ENCODE measurements at regions of chr5 and their contacts with region 1.

Region 1: GRCh38 chr5:40688127-40688761 is 8.5 kb downstream of the PTGER4 start:
- DNase-seq: peak; percentile 66 to 94 (median 81)
- ATAC-seq: peak; percentile 90
- H3K4me3 ChIP-seq: no peak overlapping the region
- H3K4me1 ChIP-seq: peaks cover 26% of the 10 kb centered on the region
- CTCF ChIP-seq: peak; percentile 70

Region 2: DNA sequence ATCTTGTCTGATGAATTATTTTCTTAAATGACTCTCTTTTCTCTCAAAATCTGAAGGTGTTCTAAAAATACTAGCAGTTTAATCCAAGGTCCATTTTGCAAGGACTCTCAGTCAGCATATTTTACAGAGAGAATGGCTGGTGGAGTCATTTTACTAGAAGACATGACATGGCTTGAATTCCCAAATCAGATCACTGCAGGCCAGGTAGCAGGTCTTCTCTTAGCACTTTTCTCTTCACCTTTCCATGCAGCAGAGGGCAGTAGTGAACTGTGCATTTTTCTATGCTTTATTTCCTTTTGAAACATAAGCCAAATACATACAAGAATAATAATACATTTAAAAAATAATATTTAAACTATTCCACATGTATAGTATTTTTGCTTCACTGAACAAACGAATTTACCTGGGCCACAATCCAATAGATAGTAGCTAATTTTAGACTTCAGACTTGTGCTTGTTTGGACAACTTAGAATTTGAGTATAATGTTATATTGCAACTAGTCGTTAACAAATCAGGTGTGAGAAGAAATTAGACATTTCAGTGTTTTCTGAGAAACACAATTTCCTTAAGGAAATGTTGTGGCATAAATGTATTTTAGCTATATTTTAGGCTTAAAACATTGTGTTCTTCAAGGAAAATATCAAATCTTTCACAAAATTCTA is 974.1 kb before region 1 on chr5:
- intact Hi-C with region 1: loop called (anchors 10 kb)
- DNase-seq: peak in 1 of 3 donors; percentile 84
- ATAC-seq: peak; percentile 83
- H3K4me3 ChIP-seq: no peak overlapping the region
- H3K4me1 ChIP-seq: peaks cover 6% of the 10 kb centered on the region
- CTCF ChIP-seq: peak; percentile 41

Region 3: GRCh38 chr5:39948867-39949468 is 739.3 kb before region 1 on chr5:
- intact Hi-C with region 1: loop called (anchors 5 to 10 kb)
- DNase-seq: peak in 1 of 3 donors; percentile 90
- ATAC-seq: peak; percentile 84
- H3K4me3 ChIP-seq: no peak overlapping the region
- H3K4me1 ChIP-seq: no peaks in the 10 kb centered on the region
- CTCF ChIP-seq: no peak

Region 4: GRCh38 chr5:40442346-40442745 is 245.9 kb before region 1 on chr5:
- intact Hi-C with region 1: loop called in 1 of 2 experiments (anchors 5 kb)
- DNase-seq: peak in 1 of 3 donors; percentile 65
- ATAC-seq: peak; percentile 73
- H3K4me3 ChIP-seq: peak overlapping the region; percentile 3
- H3K4me1 ChIP-seq: peaks cover 19% of the 10 kb centered on the region
- CTCF ChIP-seq: no peak

Region 5: DNA sequence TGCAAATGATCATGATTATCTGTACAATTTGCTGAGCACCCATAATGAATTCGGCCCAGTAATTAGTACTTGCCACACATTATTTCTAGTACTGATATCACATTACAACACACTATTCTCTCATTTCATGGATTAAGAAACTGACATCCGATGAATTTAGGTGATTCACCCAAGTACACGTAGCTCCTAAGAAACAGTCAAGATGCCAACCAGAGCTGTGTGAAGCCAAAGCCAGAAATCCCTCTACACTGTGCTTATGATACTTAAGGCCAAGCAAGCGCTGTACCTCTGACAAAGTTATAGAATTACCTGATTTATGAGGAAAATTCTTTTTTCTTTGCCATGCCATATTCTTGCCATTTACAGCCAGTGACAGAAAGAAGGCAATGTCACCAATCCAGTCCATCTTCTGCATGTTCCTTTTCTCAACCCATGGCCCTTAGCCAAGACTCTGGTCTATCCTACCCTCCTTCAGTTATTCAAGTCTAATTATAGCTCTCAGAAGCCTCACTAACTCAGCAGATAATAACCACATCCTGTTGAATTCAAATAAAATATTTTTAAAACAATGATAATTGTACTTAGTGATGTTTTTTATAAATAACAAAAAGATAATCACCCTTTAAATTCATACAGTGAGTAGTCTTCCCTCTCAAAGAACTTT is 82.8 kb before region 1 on chr5:
- intact Hi-C with region 1: no loop called
- DNase-seq: peak in 1 of 3 donors; percentile 30
- ATAC-seq: peak; percentile 55
- H3K4me3 ChIP-seq: no peak overlapping the region
- H3K4me1 ChIP-seq: no peaks in the 10 kb centered on the region
- CTCF ChIP-seq: no peak

Region 6: GRCh38 chr5:40774623-40775022 is 86.4 kb after region 1 on chr5:
- intact Hi-C with region 1: no loop called
- DNase-seq: no peak
- ATAC-seq: no peak
- H3K4me3 ChIP-seq: no peak overlapping the region
- H3K4me1 ChIP-seq: peaks cover 16% of the 10 kb centered on the region
- CTCF ChIP-seq: no peak

Measured in mucosa of descending colon (tissue), 3 donors.